SK-N-SH (cell line): ENCODE measurements at regions of chr3 and their contacts with region 1.

Region 1: GRCh38 chr3:16496408-16497222 is 16.9 kb downstream of the RFTN1 start:
- DNase-seq: no peak
- H3K4me3 ChIP-seq: no peak overlapping the region
- H3K27ac ChIP-seq: peak overlapping the region in 1 of 2 experiments; percentile 96; a peak in 1 of 4 replicates
- H3K4me1 ChIP-seq: peaks cover 12 to 40% of the 10 kb centered on the region in 2 experiments
- H3K27me3 ChIP-seq: no peaks in the 10 kb centered on the region
- CTCF ChIP-seq: no peak
- EP300 ChIP-seq: no peak
- RAD21 ChIP-seq: no peak

Region 2: GRCh38 chr3:16511681-16512434 is 15.2 kb after region 1 on chr3:
- CTCF ChIA-PET with region 1: interaction called, 11 read pairs
- POLR2A ChIA-PET with region 1: interaction called, 51 read pairs
- DNase-seq: no peak
- H3K4me3 ChIP-seq: peak overlapping the region; percentile 86 to 96
- H3K27ac ChIP-seq: peak overlapping the region; percentile 67 to 100
- H3K4me1 ChIP-seq: peaks cover 9 to 58% of the 10 kb centered on the region in 2 experiments; a peak in 3 of 4 replicates
- H3K27me3 ChIP-seq: no peaks in the 10 kb centered on the region
- CTCF ChIP-seq: peak; percentile 12; the same call in 1 of the 2 replicates
- EP300 ChIP-seq: no peak
- RAD21 ChIP-seq: no peak; the same call in 1 of the 2 replicates

Region 3: GRCh38 chr3:16522834-16523233 is 26.2 kb after region 1 on chr3:
- CTCF ChIA-PET with region 1: no interaction called
- POLR2A ChIA-PET with region 1: no interaction called
- DNase-seq: no peak
- H3K4me3 ChIP-seq: no peak overlapping the region
- H3K27ac ChIP-seq: no peak overlapping the region; a peak in 1 of 4 replicates
- H3K4me1 ChIP-seq: peaks cover 0 to 28% of the 10 kb centered on the region in 2 experiments; a peak in 2 of 4 replicates
- H3K27me3 ChIP-seq: no peaks in the 10 kb centered on the region
- CTCF ChIP-seq: no peak
- EP300 ChIP-seq: no peak
- RAD21 ChIP-seq: no peak